ENCODE measurements at regions of chr11 and their contacts with region 1.

Region 1: GRCh38 chr11:121023848-121024751 is at the start of gene TBCEL:
- DNase-seq: peak; percentile 91
- H3K4me3 ChIP-seq: peak within 1 kb of the TSS; percentile 74 to 93 (median 86)
- H3K27ac ChIP-seq: peak within 1 kb of the TSS; percentile 56 to 75 (median 73)
- H3K4me1 ChIP-seq: peaks cover 0 to 20% (median 17%) of the 10 kb centered on the region in 4 donors
- H3K27me3 ChIP-seq: no peaks in the 10 kb centered on the region
- CTCF ChIP-seq: no peak
- EP300 ChIP-seq: peak in 1 of 4 donors; percentile 16
- POLR2A ChIP-seq: no peak
- total RNA-seq, gene TBCEL: 22.4 to 53.3 (median 39.0) TPM

Region 2: DNA sequence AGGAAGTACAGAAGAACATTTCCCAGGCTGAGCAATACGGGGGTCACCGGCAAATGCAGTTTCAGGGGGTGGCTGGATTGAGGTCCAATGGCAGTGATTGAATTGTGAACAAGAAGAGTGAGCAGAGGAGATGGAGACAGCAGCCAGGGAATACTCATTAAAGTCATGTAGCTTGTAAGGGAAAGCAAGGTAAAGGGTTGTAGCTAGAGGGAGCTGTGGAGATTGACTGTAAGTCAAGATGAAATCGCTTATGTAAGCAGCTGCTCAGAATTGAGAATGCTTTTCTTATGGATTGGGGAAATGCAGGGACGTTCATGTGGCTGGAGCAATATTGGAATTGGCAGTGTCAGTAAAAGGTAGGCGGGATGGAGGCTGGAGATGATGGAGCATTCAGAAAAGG is 111.6 kb before region 1 on chr11:
- intact Hi-C with region 1: no loop called
- DNase-seq: no peak
- H3K4me3 ChIP-seq: no peak overlapping the region
- H3K27ac ChIP-seq: no peak overlapping the region
- H3K4me1 ChIP-seq: no peaks in the 10 kb centered on the region
- H3K27me3 ChIP-seq: no peaks in the 10 kb centered on the region
- CTCF ChIP-seq: no peak
- EP300 ChIP-seq: no peak
- POLR2A ChIP-seq: no peak

Region 3: GRCh38 chr11:120985718-120986569 is 38.2 kb before region 1 on chr11:
- intact Hi-C with region 1: loop called (anchors 2 kb)
- DNase-seq: peak; percentile 69
- H3K4me3 ChIP-seq: peak overlapping the region; percentile 25 to 56 (median 42)
- H3K27ac ChIP-seq: peak overlapping the region in 3 of 4 donors; percentile 17 to 65 (median 40)
- H3K4me1 ChIP-seq: peaks cover 0 to 10% (median 7%) of the 10 kb centered on the region in 4 donors
- H3K27me3 ChIP-seq: no peaks in the 10 kb centered on the region
- CTCF ChIP-seq: peak in 2 of 4 experiments; percentile 13 to 34
- EP300 ChIP-seq: no peak
- POLR2A ChIP-seq: no peak

Measured in sigmoid colon (tissue), 7 donors.